ENCODE measurements at regions of chr14 and their contacts with region 1.

Region 1: GRCh38 chr14:101761032-101761880 is at the start of gene PPP2R5C:
- DNase-seq: peak; percentile 94 to 97 (median 95)
- ATAC-seq: peak; percentile 73 to 89 (median 88)
- H3K4me3 ChIP-seq: peak within 1 kb of the TSS; percentile 65 to 100 (median 98)
- H3K27ac ChIP-seq: peak within 1 kb of the TSS; percentile 46 to 99 (median 95)
- H3K4me1 ChIP-seq: peaks cover 0 to 30% (median 11%) of the 10 kb centered on the region in 12 donors
- H3K27me3 ChIP-seq: no peaks in the 10 kb centered on the region
- CTCF ChIP-seq: no peak
- POLR2A ChIP-seq: peak in 1 of 2 donors; percentile 71
- total RNA-seq, gene PPP2R5C: 116 to 248 (median 207) TPM

Region 2: DNA sequence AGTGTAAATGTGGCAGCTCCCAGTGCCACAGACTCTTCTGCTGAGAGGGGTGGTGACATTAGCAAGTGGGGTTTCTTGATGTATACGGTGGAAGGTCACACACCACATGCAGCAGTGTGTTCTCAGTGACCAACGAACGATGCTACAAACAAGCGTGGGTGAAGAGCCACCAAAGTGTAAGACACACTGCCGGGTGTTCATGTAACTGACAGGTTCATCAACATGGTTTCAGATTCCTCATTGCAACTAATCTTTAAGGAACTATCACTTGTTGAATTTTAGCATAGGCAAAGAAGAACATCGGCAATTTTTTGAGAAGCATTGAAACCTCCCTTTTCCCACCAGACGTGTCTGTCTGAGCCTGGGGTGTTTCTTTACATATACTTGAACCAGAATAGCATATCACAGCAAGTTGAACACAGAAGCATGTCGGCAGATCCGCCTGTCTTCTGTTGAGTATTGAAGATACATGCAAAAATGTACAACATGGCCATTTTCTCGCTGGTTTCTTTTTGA is 59.1 kb after region 1 on chr14:
- intact Hi-C with region 1: no loop called
- DNase-seq: no peak
- ATAC-seq: no peak
- H3K4me3 ChIP-seq: peak overlapping the region in 1 of 12 donors; percentile 27
- H3K27ac ChIP-seq: peak overlapping the region in 2 of 12 donors; percentile 87 to 97
- H3K4me1 ChIP-seq: peaks cover 0 to 86% (median 44%) of the 10 kb centered on the region in 12 donors
- H3K27me3 ChIP-seq: no peaks in the 10 kb centered on the region
- CTCF ChIP-seq: no peak
- POLR2A ChIP-seq: no peak

Region 3: GRCh38 chr14:101834800-101835547 is 73.7 kb after region 1 on chr14:
- intact Hi-C with region 1: no loop called
- DNase-seq: no peak
- ATAC-seq: peak in 3 of 4 donors; percentile 24 to 30 (median 27)
- H3K4me3 ChIP-seq: no peak overlapping the region
- H3K27ac ChIP-seq: peak overlapping the region in 11 of 12 donors; percentile 26 to 85 (median 72)
- H3K4me1 ChIP-seq: peaks cover 0 to 94% (median 80%) of the 10 kb centered on the region in 12 donors
- H3K27me3 ChIP-seq: no peaks in the 10 kb centered on the region
- CTCF ChIP-seq: no peak
- POLR2A ChIP-seq: no peak

Region 4: GRCh38 chr14:101903111-101903561 is 141.9 kb after region 1 on chr14:
- intact Hi-C with region 1: loop called in 1 of 10 experiments (anchors 10 kb)
- DNase-seq: peak; percentile 73 to 91 (median 83)
- ATAC-seq: peak; percentile 94 to 98 (median 96)
- H3K4me3 ChIP-seq: no peak overlapping the region
- H3K27ac ChIP-seq: peak overlapping the region in 10 of 12 donors; percentile 4 to 78 (median 34)
- H3K4me1 ChIP-seq: peaks cover 0 to 20% (median 0%) of the 10 kb centered on the region in 12 donors
- H3K27me3 ChIP-seq: no peaks in the 10 kb centered on the region
- CTCF ChIP-seq: no peak
- POLR2A ChIP-seq: no peak

Region 5: GRCh38 chr14:101947906-101948665 is 186.8 kb after region 1 on chr14:
- intact Hi-C with region 1: loop called in 5 of 10 experiments (anchors 2 to 5 kb)
- DNase-seq: peak; percentile 100
- ATAC-seq: peak; percentile 98 to 99 (median 99)
- H3K4me3 ChIP-seq: peak overlapping the region; percentile 62 to 91 (median 74)
- H3K27ac ChIP-seq: peak overlapping the region; percentile 89 to 100 (median 97)
- H3K4me1 ChIP-seq: peaks cover 0 to 25% (median 13%) of the 10 kb centered on the region in 12 donors
- H3K27me3 ChIP-seq: no peaks in the 10 kb centered on the region
- CTCF ChIP-seq: no peak
- POLR2A ChIP-seq: peak; percentile 81 to 94

Measured in heart left ventricle (tissue), 16 donors.